Endothelial cell of umbilical vein (primary cell): ENCODE measurements at regions of chr10 and their contacts with region 1.

Region 1: DNA sequence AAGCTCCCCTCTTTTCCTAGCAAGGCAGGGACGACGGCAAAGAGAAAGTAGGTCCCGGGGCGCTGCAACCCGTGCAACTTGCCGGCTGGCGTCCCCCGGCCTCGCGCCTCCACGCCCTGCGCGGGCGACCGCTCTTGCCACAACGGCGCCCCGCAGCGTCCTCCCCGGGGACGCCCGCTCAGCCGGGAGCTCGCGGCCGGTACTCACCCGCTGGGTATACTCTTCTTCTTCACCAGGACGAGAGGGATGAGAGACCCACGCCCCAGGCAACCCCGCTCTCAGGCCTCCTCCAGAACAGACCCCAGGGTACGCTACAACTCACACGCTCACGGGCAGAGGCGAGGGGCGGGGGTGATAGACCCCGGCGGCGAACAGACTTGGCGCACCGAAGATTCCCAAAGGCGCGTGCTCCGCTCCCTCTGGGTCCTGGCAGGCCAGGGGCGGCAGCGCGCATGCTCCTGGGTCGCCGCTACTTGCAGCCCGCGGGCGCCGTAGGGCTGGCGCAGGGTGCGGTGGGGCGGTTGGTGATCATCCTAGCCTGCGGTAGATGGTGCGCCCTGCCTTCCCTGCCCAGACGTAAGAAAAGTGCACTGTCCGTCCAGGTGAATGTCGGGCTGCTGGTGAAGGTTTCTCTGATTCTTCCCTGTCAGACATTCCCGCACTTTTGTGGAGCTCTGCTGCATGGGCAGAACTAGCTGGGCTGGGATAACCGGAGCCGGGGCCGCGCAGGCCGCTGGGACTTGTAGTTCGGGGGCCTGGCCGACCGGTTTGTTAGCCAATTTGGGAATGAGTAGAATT is at the start of gene CC2D2B:
- DNase-seq: peak; percentile 89
- H3K4me3 ChIP-seq: peak within 1 kb of the TSS; percentile 15 to 80 (median 68)
- H3K27ac ChIP-seq: peak within 1 kb of the TSS; percentile 16
- H3K4me1 ChIP-seq: peaks cover 4% of the 10 kb centered on the region
- H3K27me3 ChIP-seq: peaks cover 0 to 1% of the 10 kb centered on the region in 2 experiments
- CTCF ChIP-seq: peak; percentile 22
- POLR2A ChIP-seq: peak; percentile 77
- total RNA-seq, gene CC2D2B: 0.53 and 1.2 TPM in 2 replicates

Region 2: DNA sequence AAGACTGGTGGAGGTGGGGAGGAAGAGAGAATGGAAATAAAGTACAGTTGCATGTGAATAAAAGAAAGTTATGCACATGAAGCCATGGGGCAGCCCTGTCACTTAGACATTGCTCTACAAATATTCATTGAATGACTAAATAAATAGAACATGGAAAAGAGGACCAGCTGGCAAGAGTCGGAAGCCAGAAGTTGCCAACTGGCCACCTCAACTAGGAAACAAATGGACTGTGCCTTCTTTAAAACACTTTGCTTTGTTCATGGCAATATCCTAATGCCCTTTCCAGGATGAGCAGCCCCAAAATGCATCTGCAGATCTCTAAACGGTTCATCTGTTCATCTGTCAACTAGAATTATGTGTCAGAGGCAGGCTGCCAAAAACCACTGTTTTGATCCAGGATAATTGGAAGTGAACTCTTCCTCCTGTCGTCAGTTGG is 1702.2 kb before region 1 on chr10:
- CTCF ChIA-PET with region 1: no interaction called
- POLR2A ChIA-PET with region 1: no interaction called
- dilution Hi-C with region 1: no loop called
- intact Hi-C with region 1: no loop called
- DNase-seq: no peak
- H3K4me3 ChIP-seq: no peak overlapping the region
- H3K27ac ChIP-seq: no peak overlapping the region
- H3K4me1 ChIP-seq: no peaks in the 10 kb centered on the region
- H3K27me3 ChIP-seq: no peaks in the 10 kb centered on the region
- CTCF ChIP-seq: no peak
- POLR2A ChIP-seq: no peak

Region 3: DNA sequence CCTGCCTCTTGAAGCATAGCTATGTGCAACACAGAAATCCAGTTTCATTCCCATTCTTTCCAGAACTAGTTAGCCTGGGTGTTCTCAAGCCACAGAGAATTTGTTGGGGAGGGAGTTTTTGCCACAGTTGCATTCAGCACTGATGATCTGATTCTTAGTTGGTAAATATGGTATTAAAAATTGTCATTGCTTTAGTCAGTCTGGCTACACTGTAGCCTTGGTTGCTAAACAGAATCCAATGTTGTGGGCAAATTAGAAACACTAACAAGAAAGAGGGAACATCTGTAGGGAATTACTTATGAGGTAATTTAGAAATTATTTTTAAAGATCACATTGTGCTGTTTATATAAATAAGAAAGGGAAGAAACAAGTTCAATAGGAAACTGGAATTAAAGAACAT is 56.9 kb before region 1 on chr10:
- CTCF ChIA-PET with region 1: no interaction called
- POLR2A ChIA-PET with region 1: no interaction called
- dilution Hi-C with region 1: no loop called
- intact Hi-C with region 1: no loop called
- DNase-seq: no peak
- H3K4me3 ChIP-seq: no peak overlapping the region
- H3K27ac ChIP-seq: no peak overlapping the region
- H3K4me1 ChIP-seq: no peaks in the 10 kb centered on the region
- H3K27me3 ChIP-seq: no peaks in the 10 kb centered on the region
- CTCF ChIP-seq: no peak
- POLR2A ChIP-seq: no peak

Region 4: DNA sequence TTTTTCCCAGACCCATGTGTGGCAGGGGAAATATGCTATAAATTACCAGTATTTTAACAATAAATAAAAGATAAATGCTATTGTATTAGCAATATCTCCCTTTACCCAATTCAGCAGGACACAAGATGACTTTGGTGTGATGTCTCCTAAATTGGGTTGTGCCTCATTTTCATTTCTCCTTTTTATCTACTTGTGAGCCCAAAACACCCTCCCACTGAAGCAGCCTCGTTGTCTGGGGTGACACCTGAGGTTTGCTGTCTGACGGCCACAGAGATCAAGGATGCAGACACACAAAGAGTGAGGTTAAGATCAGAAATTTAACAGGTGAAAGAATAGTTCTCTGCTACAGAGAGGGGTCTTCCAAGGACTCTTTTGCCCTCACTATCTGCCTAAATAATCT is 27.0 kb before region 1 on chr10:
- CTCF ChIA-PET with region 1: no interaction called
- POLR2A ChIA-PET with region 1: no interaction called
- dilution Hi-C with region 1: no loop called
- intact Hi-C with region 1: no loop called
- DNase-seq: no peak
- H3K4me3 ChIP-seq: no peak overlapping the region
- H3K27ac ChIP-seq: no peak overlapping the region
- H3K4me1 ChIP-seq: no peaks in the 10 kb centered on the region
- H3K27me3 ChIP-seq: no peaks in the 10 kb centered on the region
- CTCF ChIP-seq: no peak
- POLR2A ChIP-seq: no peak

Region 5: DNA sequence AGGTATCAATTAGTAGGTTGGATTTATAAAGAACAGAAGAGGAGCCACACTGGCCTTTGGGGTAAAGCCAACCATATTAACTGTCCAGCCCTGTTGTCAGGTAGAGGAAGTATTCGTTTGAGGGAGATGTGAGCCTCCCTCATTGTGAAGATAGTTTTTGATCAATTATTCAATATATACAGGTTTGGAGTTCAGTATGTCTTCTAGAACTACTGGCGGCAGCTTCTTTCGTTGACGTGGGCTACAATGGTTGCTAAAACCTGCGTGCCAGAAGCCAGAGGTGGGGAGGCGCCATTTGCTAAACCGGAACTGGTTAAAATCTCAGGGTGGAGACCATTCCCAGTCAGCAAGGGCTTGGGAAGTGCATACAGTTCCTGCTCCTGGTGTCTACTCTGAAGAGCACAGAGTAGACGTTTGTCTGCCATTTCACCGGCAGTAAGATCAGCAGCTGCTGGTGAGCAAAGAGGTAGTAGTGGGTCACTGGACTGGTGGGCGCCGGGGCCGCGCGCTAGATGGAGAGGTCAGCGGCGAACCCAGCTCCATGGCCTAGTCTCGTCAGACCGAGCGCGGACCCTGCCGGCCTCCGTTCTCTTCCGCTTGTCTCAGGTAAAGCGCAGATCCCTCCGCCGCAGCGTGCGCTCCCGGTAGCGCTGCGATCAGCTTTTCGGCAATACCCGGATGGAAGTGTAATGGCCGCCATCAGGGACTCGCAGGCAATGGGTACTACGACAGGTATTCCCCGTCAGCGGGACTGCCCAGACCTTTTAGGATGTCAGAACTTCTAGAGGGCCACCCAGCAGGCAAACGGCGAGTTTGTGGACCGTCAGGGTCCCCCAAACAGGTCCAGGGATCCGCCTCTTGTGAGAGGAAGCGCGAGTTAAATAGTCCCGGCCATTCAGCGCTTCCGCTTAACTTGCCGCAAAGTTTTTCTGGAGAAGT is 222.0 kb after region 1 on chr10 and contains the start of gene ZNF518A:
- CTCF ChIA-PET with region 1: interaction called, 4 read pairs
- POLR2A ChIA-PET with region 1: interaction called, 3 read pairs
- dilution Hi-C with region 1: no loop called
- intact Hi-C with region 1: loop called (anchors 5 kb)
- DNase-seq: peak; percentile 92
- H3K4me3 ChIP-seq: peak within 1 kb of the TSS; percentile 38 to 96 (median 61)
- H3K27ac ChIP-seq: peak within 1 kb of the TSS; percentile 91
- H3K4me1 ChIP-seq: peaks cover 15% of the 10 kb centered on the region
- H3K27me3 ChIP-seq: no peaks in the 10 kb centered on the region
- CTCF ChIP-seq: no peak
- POLR2A ChIP-seq: peak; percentile 77
- total RNA-seq, gene ZNF518A: 11.9 and 12.1 TPM in 2 replicates

Region 6: DNA sequence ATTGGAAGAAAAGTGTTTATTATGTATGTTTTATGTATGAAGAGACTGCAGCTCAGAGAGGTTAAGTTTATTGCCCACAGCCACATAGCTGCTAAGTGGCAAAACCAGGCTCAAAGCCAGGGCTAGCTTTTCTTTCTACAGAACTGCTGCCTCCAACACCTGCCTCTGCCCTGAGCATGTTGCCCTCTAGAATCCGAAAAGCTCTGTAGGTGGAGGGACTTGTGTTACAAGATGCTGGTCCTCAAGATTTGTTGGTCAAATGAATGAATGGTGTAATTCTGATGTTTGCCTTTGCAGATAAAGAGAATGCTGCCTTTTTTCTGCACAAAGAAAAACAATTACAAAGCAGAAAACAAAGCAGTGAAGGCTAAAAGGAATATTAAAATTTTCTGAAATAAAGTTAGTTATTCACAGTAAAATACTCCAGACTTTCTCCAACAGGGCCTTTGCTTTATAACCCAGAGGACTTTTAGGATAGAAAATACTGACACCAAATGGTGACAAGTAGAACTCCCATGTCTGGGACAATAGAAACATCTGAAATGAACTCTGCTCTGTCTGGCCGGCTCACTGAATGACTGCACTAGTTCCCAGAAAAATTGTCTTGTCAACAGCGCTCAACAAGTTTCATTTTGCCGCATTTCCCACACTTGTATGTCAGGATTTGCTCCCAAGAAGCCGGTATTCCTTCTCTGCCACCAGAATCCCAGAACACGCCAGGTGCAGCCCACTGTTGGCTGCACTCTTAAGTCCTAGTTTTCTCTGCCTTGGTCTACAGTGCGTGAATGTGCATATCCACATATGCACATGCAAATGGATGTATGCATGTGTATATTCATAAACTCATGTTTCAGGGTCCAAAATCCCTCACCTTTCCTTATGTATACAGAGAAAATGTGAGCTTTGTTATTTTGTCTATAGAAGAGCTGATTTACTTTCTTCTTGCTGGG is 385.6 kb after region 1 on chr10:
- CTCF ChIA-PET with region 1: no interaction called
- POLR2A ChIA-PET with region 1: no interaction called
- dilution Hi-C with region 1: no loop called
- intact Hi-C with region 1: loop called (anchors 5 kb)
- DNase-seq: peak; percentile 52
- H3K4me3 ChIP-seq: no peak overlapping the region
- H3K27ac ChIP-seq: no peak overlapping the region
- H3K4me1 ChIP-seq: no peaks in the 10 kb centered on the region
- H3K27me3 ChIP-seq: peaks cover 9 to 30% of the 10 kb centered on the region in 2 experiments
- CTCF ChIP-seq: peak; percentile 33 to 41
- POLR2A ChIP-seq: no peak